Activated CD8-positive, alpha-beta T cell treated with anti-CD3 and anti-CD28 coated beads, Interleukin-2, amount 10 ng/mL, durations not matched to agents 7 days and 5 days (primary cell): ENCODE measurements at regions of chr4 and their contacts with region 1.

Region 1: DNA sequence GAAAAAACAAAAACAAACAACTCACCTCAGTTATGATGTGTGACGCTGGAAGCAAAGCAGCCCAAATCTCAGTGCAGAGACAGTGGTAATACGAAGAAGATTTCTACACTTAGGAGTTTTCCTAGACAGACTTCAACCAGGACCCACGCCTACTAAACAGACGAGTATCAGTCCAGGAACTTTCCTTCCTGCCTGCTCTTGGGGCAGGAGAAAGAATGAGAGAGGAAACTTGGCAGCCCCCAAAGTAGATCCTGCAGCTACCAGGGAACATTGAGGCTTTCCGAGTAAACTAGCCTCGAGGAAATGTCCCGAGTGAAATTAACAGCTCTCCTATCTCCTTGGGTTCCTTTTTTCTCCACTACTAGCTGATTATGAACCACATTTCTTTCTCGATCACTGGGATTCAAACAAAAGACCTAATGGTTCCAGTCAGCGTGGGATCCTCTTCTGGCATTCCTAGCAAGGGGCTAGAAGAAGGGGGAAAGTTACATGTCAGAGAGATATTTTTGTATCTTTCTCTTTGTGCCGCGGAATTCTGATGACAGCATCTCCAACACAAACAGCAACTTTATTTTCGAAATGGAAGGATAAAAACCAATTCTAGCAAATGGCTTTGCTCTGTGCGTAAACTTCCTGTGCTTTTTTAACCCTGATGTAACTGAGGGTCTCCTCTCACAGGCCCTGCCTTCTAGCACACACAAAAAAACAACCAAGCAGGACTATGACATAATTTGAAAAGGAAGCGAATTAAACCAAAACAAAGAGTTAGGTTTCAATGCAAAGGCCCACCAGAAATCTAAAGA is 53.2 kb downstream of the PPM1K start:
- DNase-seq: no peak
- ATAC-seq: peak; percentile 53
- H3K4me3 Mint-ChIP-seq: peak overlapping the region; percentile 28
- H3K27ac Mint-ChIP-seq: peak overlapping the region; percentile 59
- H3K4me1 Mint-ChIP-seq: peaks cover 20% of the 10 kb centered on the region
- H3K27me3 Mint-ChIP-seq: no peaks in the 10 kb centered on the region

Region 2: DNA sequence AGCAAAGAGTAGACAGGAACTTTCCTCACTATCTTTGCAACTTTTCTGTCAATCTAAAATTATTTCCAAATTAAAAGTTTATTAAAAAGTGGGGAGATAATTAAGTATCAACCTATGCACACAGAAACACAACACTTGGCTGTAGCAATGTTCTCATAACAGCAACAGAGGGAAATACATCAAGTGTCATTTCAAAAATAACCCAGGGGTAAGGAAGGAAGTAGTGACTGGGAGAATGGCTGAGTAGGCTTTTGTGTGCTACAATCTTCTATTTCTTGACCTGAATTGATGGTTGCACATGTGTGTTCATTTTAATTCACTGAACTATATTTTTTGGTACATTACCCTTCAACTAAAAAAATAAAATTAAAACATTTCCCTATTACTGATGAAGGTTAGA is 140.3 kb before region 1 on chr4:
- CTCF ChIA-PET with region 1: no interaction called
- POLR2A ChIA-PET with region 1: no interaction called
- DNase-seq: no peak
- ATAC-seq: no peak
- H3K4me3 Mint-ChIP-seq: no peak overlapping the region
- H3K27ac Mint-ChIP-seq: no peak overlapping the region
- H3K4me1 Mint-ChIP-seq: no peaks in the 10 kb centered on the region
- H3K27me3 Mint-ChIP-seq: peaks cover 2% of the 10 kb centered on the region

Region 3: DNA sequence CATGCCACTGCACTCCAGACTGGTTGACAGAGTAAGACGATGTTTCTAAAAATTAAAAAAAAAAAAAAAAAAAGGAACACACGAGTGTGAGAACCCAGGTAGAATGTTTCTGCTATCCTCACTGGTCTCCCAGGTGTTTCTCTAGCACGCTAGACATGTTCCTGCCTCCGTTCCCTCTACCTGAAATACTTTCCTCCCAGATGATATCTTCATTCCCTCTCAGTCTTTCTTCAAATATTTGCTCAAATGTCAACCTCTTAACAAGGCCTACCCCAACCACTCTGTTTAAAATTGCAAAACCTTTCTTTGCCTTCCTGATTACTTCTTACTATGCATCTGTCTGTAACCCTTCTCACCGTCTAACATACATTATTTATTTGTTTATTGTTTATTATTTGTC is 13.2 kb before region 1 on chr4:
- CTCF ChIA-PET with region 1: interaction called, 11 read pairs
- POLR2A ChIA-PET with region 1: interaction called, 3 read pairs
- DNase-seq: no peak
- ATAC-seq: no peak
- H3K4me3 Mint-ChIP-seq: no peak overlapping the region
- H3K27ac Mint-ChIP-seq: no peak overlapping the region
- H3K4me1 Mint-ChIP-seq: peaks cover 6% of the 10 kb centered on the region
- H3K27me3 Mint-ChIP-seq: peaks cover 6% of the 10 kb centered on the region